A549 (cell line): ENCODE measurements at regions of chr1 and their contacts with region 1.

Region 1: GRCh38 chr1:28341591-28341990 is 12.8 kb downstream of the MED18 start:
- DNase-seq: no peak
- ATAC-seq: no peak
- H3K4me3 ChIP-seq: no peak overlapping the region
- H3K27ac ChIP-seq: no peak overlapping the region
- H3K4me1 ChIP-seq: peaks cover 6% of the 10 kb centered on the region; the same call in 1 of the 3 replicates
- CTCF ChIP-seq: no peak
- EP300 ChIP-seq: no peak
- POLR2A ChIP-seq: no peak
- RAD21 ChIP-seq: no peak

Region 2: DNA sequence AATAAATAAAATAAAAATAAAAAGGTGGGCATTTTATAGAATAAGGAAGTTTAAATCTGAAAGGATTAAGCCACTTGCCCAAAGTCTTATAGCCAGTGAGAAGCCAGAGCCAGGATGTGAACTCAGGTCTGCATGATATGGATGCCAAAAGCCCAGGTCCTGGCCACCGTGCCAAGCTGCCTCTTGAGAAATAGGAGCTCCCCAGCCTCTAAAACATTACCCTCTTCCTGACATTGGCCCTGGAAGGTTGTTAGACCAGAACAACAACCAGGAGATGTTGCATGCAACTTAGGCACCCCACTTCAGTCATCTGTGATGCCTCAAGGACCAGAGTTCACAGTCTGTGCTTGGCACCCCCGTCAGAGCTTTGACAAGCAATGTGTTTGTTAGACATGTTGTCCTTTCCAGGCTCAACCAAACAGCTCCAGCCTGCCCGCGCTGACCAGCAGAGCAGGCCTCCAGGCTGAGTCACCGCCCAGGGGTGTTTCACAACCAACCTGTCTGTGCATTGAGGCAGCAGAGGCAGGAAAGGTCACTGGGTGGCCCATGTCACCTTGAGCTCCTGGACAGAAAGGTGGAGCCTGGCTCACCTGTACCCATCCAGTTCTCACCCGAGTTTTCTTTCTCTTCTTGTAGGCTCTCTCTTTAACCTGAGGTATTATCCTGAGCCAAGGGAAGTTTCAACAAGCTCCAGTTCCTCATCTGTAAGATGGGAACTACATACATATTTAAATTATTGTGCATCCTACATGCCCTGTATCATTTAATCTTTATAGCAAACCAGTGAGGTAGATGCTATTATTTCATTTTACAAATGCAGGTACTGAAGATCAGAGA is 27.7 kb before region 1 on chr1:
- CTCF ChIA-PET with region 1: no interaction called
- POLR2A ChIA-PET with region 1: no interaction called
- DNase-seq: peak; percentile 47 to 62
- ATAC-seq: peak; percentile 98 to 99
- H3K4me3 ChIP-seq: no peak overlapping the region
- H3K27ac ChIP-seq: peak overlapping the region; percentile 67 to 79; a peak in 5 of 6 replicates
- H3K4me1 ChIP-seq: peaks cover 15% of the 10 kb centered on the region
- CTCF ChIP-seq: no peak
- EP300 ChIP-seq: no peak
- POLR2A ChIP-seq: no peak
- RAD21 ChIP-seq: no peak

Region 3: GRCh38 chr1:28359592-28360239 is 18.1 kb after region 1 on chr1:
- CTCF ChIA-PET with region 1: interaction called, 12 read pairs
- POLR2A ChIA-PET with region 1: no interaction called
- DNase-seq: peak; percentile 48 to 64
- ATAC-seq: peak; percentile 80 to 81; a peak in 5 of 6 replicates
- H3K4me3 ChIP-seq: no peak overlapping the region
- H3K27ac ChIP-seq: no peak overlapping the region
- H3K4me1 ChIP-seq: no peaks in the 10 kb centered on the region; the same call in 2 of the 3 replicates
- CTCF ChIP-seq: peak; percentile 65
- EP300 ChIP-seq: no peak
- POLR2A ChIP-seq: no peak
- RAD21 ChIP-seq: peak; percentile 61 to 65